A673 (cell line): ENCODE measurements at regions of chr1 and their contacts with region 1.

Region 1: DNA sequence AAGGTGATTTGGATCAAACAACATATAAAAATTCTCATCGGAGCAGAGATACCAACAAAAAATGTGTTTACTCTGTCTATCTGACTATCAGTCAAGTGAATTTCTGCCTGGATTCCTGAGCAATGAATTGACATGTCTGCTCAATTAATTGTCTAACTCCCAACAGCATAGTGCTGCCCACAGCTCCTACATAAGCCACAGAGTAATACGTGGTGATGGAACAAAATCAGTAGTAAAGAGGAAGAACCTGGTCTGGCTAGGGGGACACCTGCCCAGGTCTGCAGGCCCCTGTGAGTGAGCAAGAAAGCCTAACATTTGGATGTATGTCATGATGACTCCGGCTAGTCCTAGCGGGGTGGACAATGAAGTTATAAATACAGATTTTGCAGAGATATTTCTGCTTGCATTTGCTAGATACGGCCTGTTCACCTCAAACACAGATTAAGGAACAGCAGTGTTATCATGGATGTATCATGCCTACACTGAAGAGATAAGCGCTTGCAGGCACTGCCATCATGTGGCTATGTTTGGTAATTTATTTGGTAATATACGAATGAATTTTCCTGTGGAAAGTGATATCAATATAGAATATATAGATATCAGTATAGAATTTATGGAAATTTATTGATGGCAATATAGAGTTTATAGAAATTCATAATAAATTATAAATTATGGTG is 69.6 kb upstream of the LRRC8B start:
- DNase-seq: peak; percentile 80
- H3K4me3 ChIP-seq: no peak overlapping the region
- H3K27ac ChIP-seq: no peak overlapping the region
- H3K4me1 ChIP-seq: peaks cover 8% of the 10 kb centered on the region
- H3K27me3 ChIP-seq: no peaks in the 10 kb centered on the region
- CTCF ChIP-seq: peak; percentile 77

Region 2: GRCh38 chr1:88983791-88984559 is 471.0 kb before region 1 on chr1:
- CTCF ChIA-PET with region 1: interaction called, 10 read pairs
- POLR2A ChIA-PET with region 1: no interaction called
- intact Hi-C with region 1: loop called (anchors 5 kb)
- DNase-seq: peak; percentile 87
- H3K4me3 ChIP-seq: peak overlapping the region; percentile 28
- H3K27ac ChIP-seq: peak overlapping the region; percentile 77
- H3K4me1 ChIP-seq: peaks cover 22% of the 10 kb centered on the region
- H3K27me3 ChIP-seq: no peaks in the 10 kb centered on the region
- CTCF ChIP-seq: peak; percentile 69

Region 3: DNA sequence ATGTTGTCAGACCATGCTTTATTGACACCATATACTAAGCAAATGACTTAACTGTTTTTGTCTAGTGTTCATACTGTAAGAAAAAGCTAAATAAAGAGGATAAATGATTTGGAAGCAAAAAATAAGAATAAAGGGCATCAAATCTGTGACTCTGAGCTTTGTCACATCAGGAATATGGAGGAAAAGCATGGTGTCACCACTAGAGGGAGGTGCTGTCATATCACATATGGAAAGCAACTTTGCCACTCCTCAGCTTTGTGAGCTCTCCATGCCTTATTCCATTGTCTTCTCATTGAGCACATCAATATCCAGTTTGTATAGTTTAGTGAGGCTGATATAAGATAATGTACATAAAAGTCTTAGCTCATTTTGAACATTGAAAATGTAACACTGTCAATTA is 369.2 kb before region 1 on chr1:
- CTCF ChIA-PET with region 1: interaction called, 4 read pairs
- POLR2A ChIA-PET with region 1: no interaction called
- intact Hi-C with region 1: loop called (anchors 5 kb)
- DNase-seq: peak; percentile 78
- H3K4me3 ChIP-seq: no peak overlapping the region
- H3K27ac ChIP-seq: no peak overlapping the region
- H3K4me1 ChIP-seq: no peaks in the 10 kb centered on the region
- H3K27me3 ChIP-seq: no peaks in the 10 kb centered on the region
- CTCF ChIP-seq: peak; percentile 87

Region 4: DNA sequence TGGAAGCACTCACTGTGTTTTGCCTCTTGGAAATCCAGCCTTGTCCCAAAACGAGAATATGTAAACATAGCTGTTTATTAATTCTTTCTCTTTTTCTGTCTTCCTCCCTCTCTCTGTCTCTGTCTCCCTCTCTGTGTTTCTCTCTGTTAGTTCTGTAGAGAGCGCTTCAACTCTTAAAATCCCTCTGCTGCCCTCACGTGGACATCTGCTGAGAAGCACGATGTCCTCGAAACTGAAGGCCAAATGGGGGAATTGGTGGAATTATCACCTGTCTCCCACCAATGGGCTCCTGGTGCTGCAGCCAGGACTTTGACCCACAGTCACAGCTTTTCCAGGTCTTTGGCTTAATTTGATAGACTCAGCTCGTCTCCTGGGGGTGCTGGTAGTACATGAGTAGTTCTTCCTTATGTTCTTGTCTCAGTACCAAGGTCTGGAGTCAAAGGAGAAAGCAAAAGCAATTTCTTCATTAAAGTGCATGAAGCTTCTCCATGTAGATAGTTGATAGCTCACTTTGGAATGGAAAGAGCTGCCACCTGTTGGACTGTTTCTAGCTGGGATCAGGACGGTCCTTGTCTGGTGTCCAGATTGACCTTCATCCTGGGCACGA is 96.6 kb before region 1 on chr1:
- CTCF ChIA-PET with region 1: no interaction called
- POLR2A ChIA-PET with region 1: no interaction called
- intact Hi-C with region 1: loop called (anchors 5 kb)
- DNase-seq: peak; percentile 80
- H3K4me3 ChIP-seq: no peak overlapping the region
- H3K27ac ChIP-seq: no peak overlapping the region
- H3K4me1 ChIP-seq: no peaks in the 10 kb centered on the region
- H3K27me3 ChIP-seq: no peaks in the 10 kb centered on the region
- CTCF ChIP-seq: peak; percentile 85